Colonic mucosa (tissue), 4 donors: ENCODE measurements at regions of chr15 and their contacts with region 1.

Region 1: GRCh38 chr15:74373731-74374647 is 6.5 kb upstream of the CYP11A1 start:
- DNase-seq: peak; percentile 95
- H3K4me3 ChIP-seq: peak overlapping the region; percentile 55
- H3K27ac ChIP-seq: no peak overlapping the region
- H3K4me1 ChIP-seq: no peaks in the 10 kb centered on the region
- H3K27me3 ChIP-seq: no peaks in the 10 kb centered on the region
- CTCF ChIP-seq: peak; percentile 87

Region 2: DNA sequence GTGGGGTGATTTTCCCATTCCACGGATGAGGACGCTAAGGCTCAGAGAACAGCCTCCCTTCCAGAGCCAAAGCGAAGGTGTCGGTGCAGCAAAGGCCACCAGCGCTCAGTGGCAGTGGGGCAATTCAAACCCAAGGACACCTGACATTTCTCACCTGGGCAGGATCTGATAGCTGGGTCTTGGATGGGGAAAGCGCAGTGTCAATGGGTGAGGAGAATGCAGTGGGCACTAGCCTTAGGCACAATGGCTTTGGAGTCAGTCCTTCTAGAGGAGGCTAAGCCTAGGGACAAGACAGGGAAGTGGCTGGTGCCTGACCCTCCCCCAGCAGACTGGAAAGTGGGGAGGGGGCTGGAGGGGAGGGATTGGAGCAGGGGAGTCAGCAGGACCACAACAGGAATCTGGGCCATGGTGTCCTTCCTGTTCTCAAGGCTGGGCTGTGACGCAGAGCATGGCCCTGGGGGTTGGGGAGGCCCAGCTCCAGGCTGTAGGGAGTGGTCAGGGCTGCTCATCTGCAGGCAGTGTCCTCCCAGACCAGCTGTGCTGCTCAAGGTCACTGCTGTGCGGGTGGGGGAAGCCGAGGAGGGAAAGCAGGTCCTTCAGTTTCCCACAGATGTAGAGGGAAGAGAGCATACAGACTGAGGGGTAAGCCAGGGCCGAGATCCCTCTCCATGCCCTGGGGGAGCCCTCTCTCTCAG is 47.4 kb before region 1 on chr15:
- intact Hi-C with region 1: no loop called
- DNase-seq: no peak
- H3K4me3 ChIP-seq: no peak overlapping the region
- H3K27ac ChIP-seq: no peak overlapping the region
- H3K4me1 ChIP-seq: no peaks in the 10 kb centered on the region
- H3K27me3 ChIP-seq: no peaks in the 10 kb centered on the region
- CTCF ChIP-seq: no peak

Region 3: DNA sequence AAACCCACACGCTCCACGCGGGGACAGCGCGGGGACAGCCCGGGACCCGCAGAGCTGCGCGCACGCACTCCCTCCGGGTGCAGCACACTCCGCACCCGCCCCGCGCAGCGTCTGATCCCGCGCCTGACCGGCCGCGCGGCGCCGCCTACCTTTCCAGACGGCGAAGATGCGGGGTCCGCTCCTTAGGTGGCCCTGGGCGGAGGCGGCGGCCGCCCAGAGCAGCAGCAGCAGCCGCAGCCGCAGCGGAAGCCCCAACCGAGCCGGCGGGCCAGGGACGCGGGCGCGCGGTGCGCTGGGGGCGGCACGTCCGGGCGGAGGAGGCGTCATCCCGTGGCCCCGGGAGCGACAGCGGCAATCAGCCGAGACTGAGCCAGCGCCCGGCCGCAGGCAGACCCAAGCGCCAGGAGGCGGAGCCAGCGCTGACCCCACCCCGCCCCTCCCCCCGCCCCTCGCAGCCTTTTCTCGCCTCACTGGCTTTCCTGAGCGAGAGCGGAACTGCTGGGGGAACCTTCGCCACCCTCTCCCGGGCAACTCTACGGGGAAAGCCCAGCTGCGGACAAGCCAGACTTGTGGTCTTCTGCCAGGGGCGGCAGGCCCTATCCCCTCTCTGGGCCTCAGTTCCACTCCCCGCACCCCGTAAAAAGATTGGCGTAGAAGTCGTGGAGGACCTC is 59.7 kb after region 1 on chr15 and contains the start of gene SEMA7A:
- intact Hi-C with region 1: loop called (anchors 2 kb)
- DNase-seq: peak; percentile 76
- H3K4me3 ChIP-seq: peak within 1 kb of the TSS; percentile 84
- H3K27ac ChIP-seq: peak within 1 kb of the TSS; percentile 15
- H3K4me1 ChIP-seq: peaks cover 3% of the 10 kb centered on the region
- H3K27me3 ChIP-seq: peaks cover 27% of the 10 kb centered on the region
- CTCF ChIP-seq: no peak
- total RNA-seq, gene SEMA7A: 1.8 to 2.0 TPM

Region 4: GRCh38 chr15:74489518-74490338 is 115.7 kb after region 1 on chr15:
- intact Hi-C with region 1: loop called (anchors 5 kb)
- DNase-seq: peak; percentile 31
- H3K4me3 ChIP-seq: no peak overlapping the region
- H3K27ac ChIP-seq: no peak overlapping the region
- H3K4me1 ChIP-seq: no peaks in the 10 kb centered on the region
- H3K27me3 ChIP-seq: no peaks in the 10 kb centered on the region
- CTCF ChIP-seq: peak; percentile 55

Region 5: GRCh38 chr15:74635228-74635627 is 261.2 kb after region 1 on chr15:
- intact Hi-C with region 1: loop called (anchors 5 kb)
- DNase-seq: peak; percentile 74
- H3K4me3 ChIP-seq: no peak overlapping the region
- H3K27ac ChIP-seq: no peak overlapping the region
- H3K4me1 ChIP-seq: no peaks in the 10 kb centered on the region
- H3K27me3 ChIP-seq: no peaks in the 10 kb centered on the region
- CTCF ChIP-seq: peak; percentile 88